ENCODE measurements at regions of chr20 and their contacts with region 1.

Region 1: GRCh38 chr20:5626603-5627002 is 123.6 kb upstream of the SHLD1 start:
- DNase-seq: no peak
- H3K4me3 ChIP-seq: no peak overlapping the region
- H3K4me3 Mint-ChIP-seq: no peak overlapping the region
- H3K27ac Mint-ChIP-seq: no peak overlapping the region
- H3K4me1 ChIP-seq: no peaks in the 10 kb centered on the region
- H3K4me1 Mint-ChIP-seq: no peaks in the 10 kb centered on the region
- H3K27me3 ChIP-seq: no peaks in the 10 kb centered on the region
- H3K27me3 Mint-ChIP-seq: no peaks in the 10 kb centered on the region
- CTCF ChIP-seq: no peak

Region 2: DNA sequence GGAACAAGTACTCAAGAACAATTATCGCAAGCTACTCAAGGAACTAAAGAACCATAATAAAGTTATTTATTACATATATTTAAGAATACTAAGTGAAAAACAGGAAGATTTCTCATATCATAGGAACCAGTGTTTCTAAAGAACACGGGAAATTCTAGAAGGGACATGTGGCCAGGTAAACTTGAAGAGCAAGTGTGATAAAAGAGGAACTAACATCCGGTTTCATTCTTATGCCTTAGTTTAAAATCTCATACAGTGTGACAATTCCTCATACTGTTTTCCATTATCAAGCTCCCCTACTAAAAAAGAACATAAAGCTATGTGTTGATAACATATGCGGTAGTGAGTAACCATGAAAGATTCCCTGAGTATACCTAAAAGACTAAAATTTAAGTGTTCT is 39.9 kb before region 1 on chr20:
- CTCF ChIA-PET with region 1: no interaction called
- POLR2A ChIA-PET with region 1: no interaction called
- intact Hi-C with region 1: no loop called
- DNase-seq: no peak
- H3K4me3 ChIP-seq: no peak overlapping the region
- H3K4me3 Mint-ChIP-seq: no peak overlapping the region
- H3K27ac Mint-ChIP-seq: no peak overlapping the region
- H3K4me1 ChIP-seq: peaks cover 7% of the 10 kb centered on the region; the same call in 1 of the 2 replicates
- H3K4me1 Mint-ChIP-seq: no peaks in the 10 kb centered on the region
- H3K27me3 ChIP-seq: no peaks in the 10 kb centered on the region
- H3K27me3 Mint-ChIP-seq: no peaks in the 10 kb centered on the region
- CTCF ChIP-seq: no peak

Region 3: GRCh38 chr20:5608442-5609161 is 18.0 kb before region 1 on chr20:
- CTCF ChIA-PET with region 1: no interaction called
- POLR2A ChIA-PET with region 1: interaction called, 11 read pairs
- intact Hi-C with region 1: no loop called
- DNase-seq: no peak
- H3K4me3 ChIP-seq: no peak overlapping the region
- H3K4me3 Mint-ChIP-seq: peak overlapping the region; percentile 98
- H3K27ac Mint-ChIP-seq: peak overlapping the region; percentile 99
- H3K4me1 ChIP-seq: peaks cover 7% of the 10 kb centered on the region
- H3K4me1 Mint-ChIP-seq: peaks cover 18% of the 10 kb centered on the region
- H3K27me3 ChIP-seq: no peaks in the 10 kb centered on the region
- H3K27me3 Mint-ChIP-seq: no peaks in the 10 kb centered on the region
- CTCF ChIP-seq: no peak

Region 4: DNA sequence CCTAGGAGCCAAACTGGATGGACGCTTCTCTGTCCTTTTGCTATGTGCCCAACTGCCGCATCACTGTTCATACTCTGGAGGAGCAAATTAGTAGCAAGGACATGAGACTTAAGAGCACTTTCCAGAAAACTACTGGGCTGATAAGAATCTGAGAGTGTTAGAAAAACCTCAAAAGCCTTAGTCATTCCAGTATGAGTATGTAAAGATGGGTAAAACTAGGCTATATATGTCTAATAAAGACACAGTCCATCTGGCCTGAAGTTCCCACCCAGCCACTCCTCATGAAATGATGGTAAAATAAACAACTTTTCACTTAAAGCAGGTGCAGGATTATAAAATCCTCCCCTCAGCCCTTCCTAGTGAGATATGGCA is 154.2 kb after region 1 on chr20:
- CTCF ChIA-PET with region 1: no interaction called
- POLR2A ChIA-PET with region 1: interaction called, 10 read pairs
- intact Hi-C with region 1: no loop called
- DNase-seq: no peak
- H3K4me3 ChIP-seq: no peak overlapping the region
- H3K4me3 Mint-ChIP-seq: no peak overlapping the region
- H3K27ac Mint-ChIP-seq: no peak overlapping the region
- H3K4me1 ChIP-seq: peaks cover 38% of the 10 kb centered on the region
- H3K4me1 Mint-ChIP-seq: peaks cover 14% of the 10 kb centered on the region
- H3K27me3 ChIP-seq: no peaks in the 10 kb centered on the region
- H3K27me3 Mint-ChIP-seq: no peaks in the 10 kb centered on the region
- CTCF ChIP-seq: no peak